Natural killer cell (primary cell): ENCODE measurements at regions of chr16 and their contacts with region 1.

Region 1: DNA sequence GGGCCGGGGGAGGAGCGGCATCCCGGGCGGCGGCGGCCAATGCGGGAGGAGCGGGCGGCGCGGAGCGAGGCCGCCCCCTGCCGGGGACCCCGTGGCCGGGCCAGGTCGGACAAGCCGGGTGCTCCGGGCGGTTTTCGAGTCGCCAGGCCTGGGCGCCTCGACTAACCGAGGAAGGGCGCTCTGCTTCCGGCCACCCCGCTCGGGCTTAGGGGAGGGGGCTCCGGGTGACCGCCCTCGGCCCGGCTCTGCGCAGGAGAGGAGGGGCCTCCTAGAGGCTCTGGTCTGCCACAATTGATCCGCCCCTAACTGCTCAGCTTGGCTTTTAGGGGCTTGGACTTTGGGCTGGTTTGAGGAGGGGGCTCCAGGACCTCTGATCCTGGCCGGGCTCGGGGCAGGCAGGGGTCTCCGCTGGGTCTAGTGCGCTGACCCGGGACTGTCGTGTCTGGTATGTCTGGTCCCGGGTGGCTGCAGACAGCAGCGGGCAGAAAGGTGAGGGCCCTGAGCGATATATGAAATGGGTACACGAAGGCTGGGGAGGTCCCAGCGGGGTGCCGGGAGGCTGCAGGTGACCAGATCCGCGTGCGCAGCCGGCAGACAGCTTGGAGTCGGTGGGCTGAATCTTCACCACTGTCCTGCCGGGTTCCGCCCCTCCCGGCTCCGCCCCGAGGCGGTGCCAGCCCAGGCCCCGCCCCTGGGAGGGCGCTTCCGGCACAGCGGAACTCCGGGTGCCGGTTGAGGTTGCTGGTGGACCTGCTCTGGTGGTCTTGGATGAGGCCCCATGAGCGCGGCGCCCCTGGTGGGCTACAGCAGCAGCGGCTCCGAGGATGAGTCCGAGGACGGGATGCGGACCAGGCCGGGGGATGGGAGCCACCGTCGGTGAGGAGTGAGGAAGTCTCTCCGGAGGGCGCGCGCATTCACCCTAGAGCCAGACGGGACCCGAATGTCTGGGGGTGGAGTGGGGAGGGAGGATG is at the start of gene USB1:
- DNase-seq: peak; percentile 91 to 92
- ATAC-seq: peak; percentile 78 to 92 (median 80)
- H3K4me3 ChIP-seq: peak within 1 kb of the TSS; percentile 84
- H3K4me3 Mint-ChIP-seq: peak within 1 kb of the TSS; percentile 92
- H3K27ac ChIP-seq: peak within 1 kb of the TSS; percentile 86
- H3K27ac Mint-ChIP-seq: peak within 1 kb of the TSS; percentile 86 to 90
- H3K4me1 ChIP-seq: peaks cover 56% of the 10 kb centered on the region
- H3K4me1 Mint-ChIP-seq: peaks cover 55 to 64% of the 10 kb centered on the region in 2 donors
- H3K27me3 ChIP-seq: no peaks in the 10 kb centered on the region
- H3K27me3 Mint-ChIP-seq: no peaks in the 10 kb centered on the region
- CTCF ChIP-seq: peak; percentile 81
- total RNA-seq, gene USB1: 64.7 to 86.0 (median 84.8) TPM

Region 2: GRCh38 chr16:57667526-57668258 is 333.3 kb before region 1 on chr16:
- intact Hi-C with region 1: loop called (anchors 10 kb)
- DNase-seq: peak; percentile 52 to 77
- ATAC-seq: peak; percentile 76 to 92 (median 82)
- H3K4me3 ChIP-seq: no peak overlapping the region
- H3K4me3 Mint-ChIP-seq: peak overlapping the region; percentile 53
- H3K27ac ChIP-seq: peak overlapping the region; percentile 90
- H3K27ac Mint-ChIP-seq: peak overlapping the region; percentile 97 to 98
- H3K4me1 ChIP-seq: peaks cover 53% of the 10 kb centered on the region
- H3K4me1 Mint-ChIP-seq: peaks cover 38 to 54% of the 10 kb centered on the region in 2 donors
- H3K27me3 ChIP-seq: no peaks in the 10 kb centered on the region
- H3K27me3 Mint-ChIP-seq: no peaks in the 10 kb centered on the region
- CTCF ChIP-seq: no peak

Region 3: GRCh38 chr16:57802341-57803133 is 198.5 kb before region 1 on chr16 and contains the start of gene KIFC3:
- intact Hi-C with region 1: loop called (anchors 2 kb)
- DNase-seq: peak; percentile 81 to 86
- ATAC-seq: peak; percentile 83 to 90 (median 88)
- H3K4me3 ChIP-seq: peak within 1 kb of the TSS; percentile 39
- H3K4me3 Mint-ChIP-seq: peak within 1 kb of the TSS; percentile 98
- H3K27ac ChIP-seq: peak within 1 kb of the TSS; percentile 28
- H3K27ac Mint-ChIP-seq: peak within 1 kb of the TSS; percentile 91 to 96
- H3K4me1 ChIP-seq: peaks cover 45% of the 10 kb centered on the region
- H3K4me1 Mint-ChIP-seq: peaks cover 43 to 48% of the 10 kb centered on the region in 2 donors
- H3K27me3 ChIP-seq: no peaks in the 10 kb centered on the region
- H3K27me3 Mint-ChIP-seq: no peaks in the 10 kb centered on the region
- CTCF ChIP-seq: peak; percentile 23
- total RNA-seq, gene KIFC3: 54.2 to 106 (median 84.9) TPM

Region 4: GRCh38 chr16:58046128-58046881 is 45.3 kb after region 1 on chr16:
- intact Hi-C with region 1: no loop called
- DNase-seq: no peak
- ATAC-seq: no peak
- H3K4me3 ChIP-seq: no peak overlapping the region
- H3K4me3 Mint-ChIP-seq: no peak overlapping the region
- H3K27ac ChIP-seq: no peak overlapping the region
- H3K27ac Mint-ChIP-seq: no peak overlapping the region
- H3K4me1 ChIP-seq: no peaks in the 10 kb centered on the region
- H3K4me1 Mint-ChIP-seq: no peaks in the 10 kb centered on the region
- H3K27me3 ChIP-seq: no peaks in the 10 kb centered on the region
- H3K27me3 Mint-ChIP-seq: peaks cover 0 to 3% of the 10 kb centered on the region in 2 donors
- CTCF ChIP-seq: no peak

Region 5: DNA sequence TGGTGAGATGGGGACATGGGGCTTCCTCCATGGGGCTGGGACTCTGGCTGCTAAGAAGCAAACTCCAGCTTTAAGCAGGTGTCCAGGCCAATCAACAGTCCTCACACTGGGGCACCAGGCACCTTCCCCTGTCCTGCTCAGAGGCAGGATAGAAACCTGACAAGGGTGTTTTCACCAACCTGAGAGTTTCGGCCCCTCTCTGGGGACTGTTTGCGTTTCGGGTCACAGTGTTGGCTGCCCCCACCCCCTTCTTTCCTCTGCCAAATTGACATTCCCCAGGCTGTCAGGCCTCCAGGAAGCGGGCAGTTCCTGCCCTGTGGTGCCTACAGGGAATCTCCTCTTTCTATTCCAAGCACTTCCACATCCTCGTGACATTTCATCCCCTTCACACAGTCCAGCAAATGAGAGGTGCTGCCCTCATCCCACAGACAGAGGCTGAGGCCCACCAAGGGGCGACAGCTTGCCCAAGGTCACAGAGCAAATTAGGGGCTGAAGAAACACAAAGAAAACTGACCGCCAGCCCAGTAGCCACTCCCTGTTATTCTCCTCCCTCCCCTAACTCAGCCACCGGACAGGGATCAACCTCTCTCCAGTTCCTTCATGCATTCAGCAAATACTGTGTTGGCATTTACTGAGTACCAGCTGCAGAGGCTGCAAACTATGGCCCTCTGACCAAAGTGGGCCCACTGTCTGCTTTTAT is 62.5 kb after region 1 on chr16:
- intact Hi-C with region 1: no loop called
- DNase-seq: no peak
- ATAC-seq: no peak
- H3K4me3 ChIP-seq: no peak overlapping the region
- H3K4me3 Mint-ChIP-seq: no peak overlapping the region
- H3K27ac ChIP-seq: no peak overlapping the region
- H3K27ac Mint-ChIP-seq: no peak overlapping the region
- H3K4me1 ChIP-seq: no peaks in the 10 kb centered on the region
- H3K4me1 Mint-ChIP-seq: no peaks in the 10 kb centered on the region
- H3K27me3 ChIP-seq: no peaks in the 10 kb centered on the region
- H3K27me3 Mint-ChIP-seq: no peaks in the 10 kb centered on the region
- CTCF ChIP-seq: no peak